ENCODE measurements at regions of chr9 and their contacts with region 1.

Region 1: GRCh38 chr9:6055213-6055612 is 39.8 kb upstream of the RANBP6 start:
- DNase-seq: peak; percentile 61
- H3K4me3 ChIP-seq: no peak overlapping the region
- CTCF ChIP-seq: peak; percentile 24

Region 2: GRCh38 chr9:5735072-5735471 is 320.1 kb before region 1 on chr9:
- CTCF ChIA-PET with region 1: no interaction called
- POLR2A ChIA-PET with region 1: no interaction called
- DNase-seq: no peak
- H3K4me3 ChIP-seq: no peak overlapping the region
- CTCF ChIP-seq: no peak

Region 3: DNA sequence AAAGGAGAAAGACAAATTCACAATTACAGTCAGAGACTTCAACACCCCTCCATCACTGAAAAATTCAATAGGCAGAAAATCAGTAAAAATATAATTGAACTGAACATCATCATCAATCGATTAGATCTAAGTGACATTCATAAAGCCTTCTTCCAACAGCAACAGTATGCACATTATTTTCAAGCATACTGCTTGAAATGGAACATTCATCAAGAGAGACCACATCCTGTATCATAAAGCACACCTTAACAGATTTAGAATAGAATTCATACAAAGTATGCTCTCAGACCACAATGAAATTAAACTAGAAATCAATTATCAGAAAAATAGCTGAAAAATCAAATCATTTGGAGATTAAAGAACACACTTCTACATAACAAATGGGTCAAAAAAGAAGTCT is 261.4 kb before region 1 on chr9:
- CTCF ChIA-PET with region 1: interaction called, 11 read pairs
- POLR2A ChIA-PET with region 1: no interaction called
- DNase-seq: no peak
- H3K4me3 ChIP-seq: no peak overlapping the region
- CTCF ChIP-seq: no peak

Region 4: DNA sequence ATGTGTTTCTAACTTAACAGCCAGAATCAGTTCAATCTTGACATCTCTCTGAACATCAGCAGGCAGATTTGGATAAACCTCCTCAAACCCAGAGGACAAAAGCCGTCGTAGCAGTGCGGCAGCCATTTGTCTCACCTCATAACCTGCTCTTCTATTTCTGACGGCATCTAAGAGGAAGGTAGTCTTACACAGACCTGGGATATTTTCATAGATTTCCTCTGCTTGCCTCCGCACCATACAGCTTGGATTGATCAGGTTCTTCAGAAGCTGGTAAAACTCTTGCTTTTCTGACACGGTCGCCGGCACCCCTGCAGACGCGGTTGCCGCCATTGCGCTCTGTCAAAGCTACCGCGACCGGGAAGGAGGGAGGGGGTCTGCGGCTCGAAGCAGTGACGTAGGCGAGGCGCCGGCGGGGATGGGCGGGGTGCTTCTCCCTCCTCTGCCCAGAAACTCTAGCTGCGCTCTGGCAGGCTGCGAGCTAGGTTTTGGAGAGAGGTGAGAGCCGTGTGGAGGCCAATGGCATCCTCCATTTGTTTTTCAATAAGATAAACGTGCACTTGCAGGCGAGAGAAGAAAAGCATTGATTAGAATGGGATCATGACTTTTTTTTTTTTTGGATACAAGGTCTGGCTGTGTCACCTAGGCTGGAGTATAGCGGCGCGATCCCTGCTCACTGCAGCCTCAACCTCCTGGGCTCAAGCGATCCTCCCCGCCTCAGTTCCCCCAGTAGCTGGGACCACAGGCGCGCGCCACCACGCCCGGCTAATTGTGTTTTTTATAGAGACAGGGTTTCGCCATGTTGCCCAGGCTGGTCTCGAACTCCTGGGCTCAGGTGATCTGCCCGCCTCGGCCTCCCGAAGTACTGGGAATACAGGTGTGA is 39.7 kb before region 1 on chr9 and contains the start of gene RANBP6:
- CTCF ChIA-PET with region 1: interaction called, 16 read pairs
- POLR2A ChIA-PET with region 1: no interaction called
- DNase-seq: peak; percentile 5
- H3K4me3 ChIP-seq: peak within 1 kb of the TSS; percentile 87
- CTCF ChIP-seq: no peak

Region 5: GRCh38 chr9:6029604-6030274 is 25.5 kb before region 1 on chr9:
- CTCF ChIA-PET with region 1: interaction called, 10 read pairs
- POLR2A ChIA-PET with region 1: no interaction called
- DNase-seq: no peak
- H3K4me3 ChIP-seq: no peak overlapping the region
- CTCF ChIP-seq: no peak

Region 6: GRCh38 chr9:6305954-6306563 is 250.8 kb after region 1 on chr9:
- CTCF ChIA-PET with region 1: interaction called, 65 read pairs
- POLR2A ChIA-PET with region 1: no interaction called
- DNase-seq: no peak
- H3K4me3 ChIP-seq: no peak overlapping the region
- CTCF ChIP-seq: peak; percentile 28

Measured in AG04449 (cell line).